ENCODE measurements at regions of chr10 and their contacts with region 1.

Region 1: DNA sequence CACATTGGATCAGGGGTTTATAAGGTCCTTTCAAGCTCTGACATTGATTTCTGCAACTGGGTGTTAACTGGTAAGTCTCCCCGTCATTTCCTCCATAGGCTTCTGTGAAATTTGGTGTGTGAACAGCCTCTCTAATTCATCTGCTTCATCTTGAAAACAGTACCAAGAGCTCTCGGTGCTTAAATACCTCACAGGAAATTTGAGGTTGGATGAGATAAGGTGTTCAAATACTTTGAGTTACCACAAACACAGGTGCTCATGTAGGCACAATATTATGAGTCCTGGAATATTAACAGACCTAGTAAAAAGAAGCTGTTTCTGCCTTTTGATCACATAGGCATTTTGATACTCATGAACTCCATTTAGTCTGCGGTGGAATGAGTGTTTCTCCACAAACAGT is 85.2 kb downstream of the RTKN2 start:
- DNase-seq: peak; percentile 40
- H3K4me3 Mint-ChIP-seq: no peak overlapping the region
- H3K27ac Mint-ChIP-seq: peak overlapping the region; percentile 96
- H3K4me1 Mint-ChIP-seq: peaks cover 85% of the 10 kb centered on the region
- H3K27me3 Mint-ChIP-seq: no peaks in the 10 kb centered on the region

Region 2: DNA sequence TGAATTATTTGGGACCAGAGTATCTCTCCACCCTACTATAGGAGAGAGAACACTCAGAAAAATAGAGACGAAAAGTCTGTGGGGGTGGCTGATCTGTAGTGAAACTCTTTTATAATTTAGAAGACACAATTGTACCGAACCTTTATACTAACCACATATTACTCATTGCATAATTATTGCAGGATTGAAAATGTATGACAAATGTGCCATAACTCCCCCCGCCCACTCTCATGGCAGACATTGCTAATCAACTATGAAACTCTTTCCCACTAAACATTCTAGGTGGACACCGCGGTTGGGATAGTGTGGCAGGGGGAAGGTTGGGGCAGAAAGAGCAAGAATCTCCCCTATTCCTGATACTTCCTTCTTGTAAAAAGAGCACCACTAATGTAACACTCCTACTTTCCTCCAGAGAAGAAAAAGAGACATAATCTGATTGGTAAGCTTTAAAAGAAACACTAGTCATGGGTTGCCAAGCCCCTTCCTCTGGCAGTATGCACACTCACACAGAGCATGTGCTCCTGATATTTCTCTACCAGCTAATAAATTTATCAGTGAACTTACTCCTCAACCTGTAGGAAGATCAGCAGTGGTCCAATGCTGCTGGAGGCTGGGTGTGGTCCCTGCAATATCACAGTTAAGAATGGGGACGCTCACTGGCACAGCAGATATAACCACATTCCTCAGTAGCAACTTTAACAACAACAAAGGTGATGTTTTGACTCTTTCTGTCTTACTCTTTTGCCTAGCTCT is 300.6 kb before region 1 on chr10:
- CTCF ChIA-PET with region 1: no interaction called
- POLR2A ChIA-PET with region 1: interaction called, 5 read pairs
- intact Hi-C with region 1: loop called (anchors 1 kb)
- DNase-seq: peak; percentile 84
- H3K4me3 Mint-ChIP-seq: peak overlapping the region; percentile 47
- H3K27ac Mint-ChIP-seq: peak overlapping the region; percentile 77
- H3K4me1 Mint-ChIP-seq: peaks cover 30% of the 10 kb centered on the region
- H3K27me3 Mint-ChIP-seq: no peaks in the 10 kb centered on the region

Region 3: GRCh38 chr10:61961278-61961677 is 222.2 kb before region 1 on chr10:
- CTCF ChIA-PET with region 1: interaction called, 3 read pairs
- POLR2A ChIA-PET with region 1: interaction called, 3 read pairs
- intact Hi-C with region 1: loop called (anchors 1 kb)
- DNase-seq: peak; percentile 49
- H3K4me3 Mint-ChIP-seq: peak overlapping the region; percentile 24
- H3K27ac Mint-ChIP-seq: peak overlapping the region; percentile 76
- H3K4me1 Mint-ChIP-seq: peaks cover 87% of the 10 kb centered on the region
- H3K27me3 Mint-ChIP-seq: no peaks in the 10 kb centered on the region

Region 4: GRCh38 chr10:62082729-62083411 is 100.6 kb before region 1 on chr10:
- CTCF ChIA-PET with region 1: no interaction called
- POLR2A ChIA-PET with region 1: interaction called, 6 read pairs
- intact Hi-C with region 1: loop called (anchors 1 kb)
- DNase-seq: peak; percentile 75
- H3K4me3 Mint-ChIP-seq: peak overlapping the region; percentile 18
- H3K27ac Mint-ChIP-seq: peak overlapping the region; percentile 85
- H3K4me1 Mint-ChIP-seq: peaks cover 77% of the 10 kb centered on the region
- H3K27me3 Mint-ChIP-seq: no peaks in the 10 kb centered on the region

Region 5: DNA sequence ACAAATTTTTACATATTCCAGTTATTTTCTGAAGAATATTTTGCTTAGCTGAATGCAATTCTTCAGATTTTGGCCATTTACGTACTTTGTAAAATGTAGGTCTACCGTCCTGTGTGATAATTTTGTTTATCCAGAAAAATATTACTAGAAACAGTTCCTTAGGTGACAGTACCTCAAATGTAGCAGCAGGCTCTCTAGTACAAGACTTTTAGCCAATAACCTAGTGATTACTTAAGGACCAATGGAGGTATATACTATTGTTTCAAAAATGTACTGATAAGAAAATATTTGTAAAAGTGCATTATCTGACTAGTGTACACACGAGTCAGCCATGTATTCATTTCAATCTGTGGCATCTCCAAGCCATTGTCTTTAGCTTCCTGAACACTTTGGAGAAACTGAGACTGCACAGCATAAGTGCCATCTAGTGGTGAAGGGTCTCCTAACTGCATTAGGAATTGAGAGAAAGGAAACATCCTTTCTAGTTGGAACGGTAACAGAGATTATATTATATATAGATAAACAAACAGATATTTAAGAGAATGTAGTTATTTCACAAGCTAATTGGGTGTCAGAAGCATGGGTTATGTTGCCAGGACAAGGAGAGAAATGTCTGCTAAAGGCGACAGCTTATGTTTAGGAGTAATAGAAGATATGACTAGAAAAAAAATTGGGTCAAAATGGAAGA is 61.5 kb after region 1 on chr10:
- CTCF ChIA-PET with region 1: interaction called, 9 read pairs
- POLR2A ChIA-PET with region 1: interaction called, 12 read pairs
- intact Hi-C with region 1: loop called (anchors 1 kb)
- DNase-seq: peak; percentile 62
- H3K4me3 Mint-ChIP-seq: no peak overlapping the region
- H3K27ac Mint-ChIP-seq: peak overlapping the region; percentile 69
- H3K4me1 Mint-ChIP-seq: peaks cover 37% of the 10 kb centered on the region
- H3K27me3 Mint-ChIP-seq: no peaks in the 10 kb centered on the region

Region 6: DNA sequence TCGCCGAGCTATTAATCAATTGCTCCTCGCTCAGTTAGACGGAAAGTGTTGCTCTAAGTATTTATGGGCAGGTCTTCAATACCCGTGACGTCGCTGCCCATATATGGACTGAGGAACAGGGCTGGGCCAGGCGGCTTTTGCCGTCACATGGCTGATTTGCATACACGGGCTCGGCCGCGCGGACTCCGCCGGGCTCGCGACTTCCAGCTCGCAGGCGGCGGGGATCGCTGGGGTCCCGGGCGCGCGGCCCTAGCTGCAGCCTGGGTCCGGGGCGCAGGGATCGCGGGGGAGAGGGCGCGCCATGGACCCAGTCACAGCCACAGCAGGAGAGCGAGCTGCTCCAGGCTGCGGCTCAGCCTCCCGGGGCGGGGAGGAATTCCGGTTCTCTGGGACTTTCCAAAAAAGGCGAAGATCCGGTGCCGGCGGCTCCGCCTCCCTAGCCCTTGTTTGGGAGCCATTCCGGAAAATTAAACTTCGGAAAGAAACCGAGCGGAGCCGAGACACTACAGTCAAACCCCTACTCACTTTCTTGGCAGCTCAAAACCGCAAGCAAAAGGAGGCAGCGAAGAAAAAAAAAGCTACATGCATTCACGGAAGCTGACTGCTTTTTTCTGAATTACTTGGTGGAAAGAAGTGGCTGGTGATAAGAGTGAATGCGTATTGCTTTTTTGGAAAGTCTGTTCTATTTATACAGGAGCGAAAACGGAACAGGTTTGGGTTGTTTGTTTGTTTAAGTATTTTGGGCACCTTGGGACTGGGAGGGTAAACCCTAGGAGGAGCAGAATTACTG is 633.1 kb after region 1 on chr10 and contains the start of gene EGR2:
- CTCF ChIA-PET with region 1: no interaction called
- POLR2A ChIA-PET with region 1: no interaction called
- intact Hi-C with region 1: loop called (anchors 2 kb)
- DNase-seq: peak; percentile 97
- H3K4me3 Mint-ChIP-seq: peak within 1 kb of the TSS; percentile 88
- H3K27ac Mint-ChIP-seq: peak within 1 kb of the TSS; percentile 100
- H3K4me1 Mint-ChIP-seq: peaks cover 40% of the 10 kb centered on the region
- H3K27me3 Mint-ChIP-seq: peaks cover 21% of the 10 kb centered on the region
- total RNA-seq, gene EGR2: 66.9 to 68.2 TPM

Region 7: GRCh38 chr10:62895058-62895457 is 711.6 kb after region 1 on chr10:
- CTCF ChIA-PET with region 1: no interaction called
- POLR2A ChIA-PET with region 1: no interaction called
- intact Hi-C with region 1: no loop called
- DNase-seq: no peak
- H3K4me3 Mint-ChIP-seq: no peak overlapping the region
- H3K27ac Mint-ChIP-seq: no peak overlapping the region
- H3K4me1 Mint-ChIP-seq: peaks cover 3% of the 10 kb centered on the region
- H3K27me3 Mint-ChIP-seq: peaks cover 9% of the 10 kb centered on the region

Measured in activated CD4-positive, alpha-beta memory T cell treated with anti-CD3 and anti-CD28 coated beads for 36 hours (primary cell).